AG04449 (cell line): ENCODE measurements at regions of chr10 and their contacts with region 1.

Region 1: GRCh38 chr10:50224330-50224952 is 26.9 kb downstream of the ASAH2 start:
- DNase-seq: peak; percentile 23
- H3K4me3 ChIP-seq: no peak overlapping the region
- CTCF ChIP-seq: peak; percentile 76

Region 2: GRCh38 chr10:49734661-49735071 is 489.8 kb before region 1 on chr10:
- CTCF ChIA-PET with region 1: no interaction called
- POLR2A ChIA-PET with region 1: no interaction called
- DNase-seq: no peak
- H3K4me3 ChIP-seq: no peak overlapping the region
- CTCF ChIP-seq: no peak

Region 3: GRCh38 chr10:50234486-50234885 is 10.0 kb after region 1 on chr10:
- CTCF ChIA-PET with region 1: interaction called, 26 read pairs
- POLR2A ChIA-PET with region 1: no interaction called
- DNase-seq: no peak
- H3K4me3 ChIP-seq: no peak overlapping the region
- CTCF ChIP-seq: no peak

Region 4: GRCh38 chr10:50250096-50250854 is 25.8 kb after region 1 on chr10:
- CTCF ChIA-PET with region 1: no interaction called
- POLR2A ChIA-PET with region 1: no interaction called
- DNase-seq: no peak
- H3K4me3 ChIP-seq: no peak overlapping the region
- CTCF ChIP-seq: no peak